ENCODE measurements at regions of chr10 and their contacts with region 1.

Region 1: DNA sequence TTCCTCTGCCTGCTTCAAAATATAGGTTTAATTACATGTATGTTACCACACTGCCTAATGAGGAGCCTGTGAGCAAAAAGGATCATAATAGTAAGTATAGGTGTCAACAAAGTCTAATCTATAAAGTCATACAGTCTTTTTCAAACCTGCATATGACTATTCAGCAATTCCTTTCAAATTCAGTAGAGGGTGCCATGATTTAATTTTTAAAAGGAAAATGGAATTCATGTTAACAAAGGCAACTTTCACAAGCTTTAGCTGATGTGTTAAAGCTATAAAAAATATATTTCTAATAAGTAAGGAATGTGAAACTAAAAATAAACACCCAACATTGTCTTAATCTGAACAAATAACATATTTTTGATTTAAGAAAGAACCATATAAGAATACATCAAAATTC is 52.1 kb downstream of the MPP7 start:
- DNase-seq: no peak
- ATAC-seq: peak; percentile 63
- H3K4me3 ChIP-seq: no peak overlapping the region
- H3K27ac ChIP-seq: peak overlapping the region in 1 of 2 donors; percentile 7
- H3K4me1 ChIP-seq: peaks cover 2 to 8% of the 10 kb centered on the region in 2 donors
- H3K27me3 ChIP-seq: no peaks in the 10 kb centered on the region

Region 2: DNA sequence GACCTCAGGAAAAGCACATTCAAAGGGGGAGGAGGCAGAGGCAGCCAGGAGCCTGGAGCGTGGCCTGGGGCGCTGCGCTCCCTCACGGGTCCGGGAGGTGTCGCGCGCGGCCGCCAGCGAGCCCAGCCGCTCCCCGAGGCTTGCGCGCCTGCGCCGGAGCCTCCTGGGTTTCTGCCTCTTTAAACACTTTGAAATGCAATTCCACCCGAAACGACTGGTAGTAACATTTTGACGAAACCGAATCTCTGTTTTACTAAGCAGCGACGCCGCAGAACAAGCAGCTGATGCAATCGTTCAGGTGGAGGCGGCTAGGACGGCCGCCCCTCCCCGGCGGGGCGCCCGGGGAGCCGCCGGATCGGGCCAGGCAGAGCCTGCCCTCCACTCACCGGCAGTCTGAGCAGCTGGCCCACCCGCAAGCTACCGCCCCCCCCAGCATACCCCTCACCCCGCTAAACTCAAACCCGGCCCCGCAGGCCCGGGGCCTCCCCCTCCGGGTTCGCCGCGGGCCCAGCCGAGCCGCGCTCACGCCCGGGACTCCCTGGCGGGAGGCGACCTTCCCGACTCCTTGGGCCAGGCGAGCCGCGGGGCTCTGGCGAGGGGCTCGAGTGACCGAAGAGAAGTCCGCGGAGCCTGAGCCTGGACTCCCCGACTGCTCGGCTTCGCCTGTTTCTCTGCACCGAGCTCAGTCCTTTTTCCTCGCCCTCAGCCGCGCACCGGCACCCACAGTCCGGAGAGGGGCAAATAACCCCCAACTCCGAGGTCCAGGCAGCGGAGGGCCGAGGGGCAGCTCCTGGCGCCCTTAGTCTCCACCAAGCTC is 508.4 kb before region 1 on chr10:
- intact Hi-C with region 1: loop called in 1 of 2 experiments (anchors 5 kb)
- DNase-seq: peak; percentile 86 to 94
- ATAC-seq: peak; percentile 90
- H3K4me3 ChIP-seq: peak overlapping the region; percentile 78 to 81
- H3K27ac ChIP-seq: peak overlapping the region; percentile 87 to 94
- H3K4me1 ChIP-seq: no peaks in the 10 kb centered on the region
- H3K27me3 ChIP-seq: no peaks in the 10 kb centered on the region

Region 3: DNA sequence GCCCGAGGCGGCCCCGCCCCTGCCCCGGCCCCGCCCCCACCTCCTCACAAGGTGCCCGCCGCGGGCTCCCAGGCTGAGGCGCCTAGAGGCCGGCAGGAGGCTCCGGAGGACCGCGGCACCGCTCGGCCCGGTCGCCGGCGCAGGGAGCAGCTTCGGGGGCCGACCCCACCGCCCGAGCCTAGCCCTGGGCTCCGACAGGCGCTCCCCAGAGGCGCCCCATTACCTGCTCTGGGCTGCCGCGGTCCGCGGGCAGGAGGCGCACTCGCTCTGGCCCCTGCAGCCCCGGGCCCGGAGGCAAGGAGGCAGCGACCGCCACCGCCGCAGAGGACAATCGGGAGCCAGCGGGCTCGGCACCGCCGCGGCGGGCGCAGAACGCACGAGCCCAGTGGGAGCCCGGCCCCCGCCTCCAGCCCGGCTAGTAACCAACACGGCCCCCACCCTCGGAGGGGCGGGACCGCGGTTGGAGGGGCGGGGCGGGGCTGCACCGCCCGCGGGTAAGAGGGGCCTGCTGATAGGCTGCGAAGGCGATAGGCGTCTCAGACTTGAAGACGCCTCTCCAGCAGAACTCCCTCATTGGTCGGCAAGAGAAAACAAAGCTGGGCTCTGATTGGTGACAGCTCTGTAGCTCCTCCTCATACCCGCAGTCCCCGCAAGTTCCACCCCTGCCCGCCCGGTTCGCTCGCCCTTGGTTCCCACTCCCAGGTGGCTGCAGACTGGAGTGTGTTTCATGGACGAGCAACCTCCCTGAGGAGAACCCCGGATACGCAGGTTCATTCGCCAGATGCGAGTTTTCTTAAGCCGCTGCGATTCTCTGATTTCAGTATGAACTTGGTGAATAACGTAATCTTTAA is 52.1 kb after region 1 on chr10 and contains the start of gene MPP7:
- intact Hi-C with region 1: loop called (anchors 2 to 5 kb)
- DNase-seq: peak; percentile 96 to 97
- ATAC-seq: peak; percentile 100
- H3K4me3 ChIP-seq: peak within 1 kb of the TSS; percentile 79 to 89
- H3K27ac ChIP-seq: peak within 1 kb of the TSS; percentile 91 to 95
- H3K4me1 ChIP-seq: peaks cover 0 to 3% of the 10 kb centered on the region in 2 donors
- H3K27me3 ChIP-seq: no peaks in the 10 kb centered on the region
- total RNA-seq, gene MPP7: 38.0 to 95.3 TPM

Region 4: DNA sequence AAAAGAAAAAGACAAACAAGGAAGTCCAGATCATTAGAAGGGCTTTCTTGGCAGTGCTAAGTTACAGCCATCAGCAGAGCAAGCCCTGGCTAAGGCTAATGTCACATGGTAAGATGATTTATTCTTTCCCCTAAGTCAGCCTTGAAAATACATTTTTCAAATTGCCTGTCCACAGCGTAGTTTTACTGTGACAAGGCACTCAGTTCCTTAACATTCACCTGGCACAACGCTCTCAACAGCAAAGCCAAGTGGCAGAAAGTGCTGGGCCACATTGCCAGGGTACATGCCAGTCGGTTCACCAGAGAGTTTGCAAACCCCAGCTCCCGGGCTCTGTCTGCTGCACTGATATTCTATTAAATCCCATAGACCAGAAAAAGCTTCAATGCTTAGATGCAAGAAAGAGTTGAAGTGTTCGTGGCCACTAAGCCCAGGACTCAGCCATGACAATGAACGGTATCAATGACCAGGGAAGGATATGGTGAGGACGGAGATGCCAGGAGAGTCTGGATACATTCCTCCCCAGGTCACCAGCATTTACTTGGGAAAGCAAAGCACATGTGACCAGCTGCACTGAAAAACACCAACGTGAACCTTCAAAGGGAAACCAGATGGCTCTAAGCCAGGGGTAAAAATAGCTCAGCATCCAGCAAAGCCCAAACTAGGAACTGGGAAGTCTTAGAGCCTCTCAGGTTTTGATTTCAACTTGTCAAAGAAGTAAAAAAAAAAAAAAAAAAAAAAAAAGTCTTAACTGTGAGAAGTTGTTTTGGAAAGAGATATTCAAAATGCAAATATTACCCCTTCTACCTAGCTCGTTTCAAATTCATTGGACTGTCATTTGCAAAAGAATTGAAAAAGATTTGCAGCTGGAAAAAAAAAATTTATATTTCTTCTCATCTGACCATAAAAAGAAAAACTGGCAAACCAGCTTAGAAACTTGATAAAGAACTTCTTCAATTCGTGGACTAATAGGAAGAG is 76.0 kb after region 1 on chr10:
- intact Hi-C with region 1: loop called in 1 of 2 experiments (anchors 2 kb)
- DNase-seq: peak; percentile 58 to 76
- ATAC-seq: peak; percentile 88
- H3K4me3 ChIP-seq: no peak overlapping the region
- H3K27ac ChIP-seq: peak overlapping the region; percentile 62 to 97
- H3K4me1 ChIP-seq: peaks cover 0 to 5% of the 10 kb centered on the region in 2 donors
- H3K27me3 ChIP-seq: no peaks in the 10 kb centered on the region